ENCODE measurements at regions of chr7 and their contacts with region 1.

Region 1: DNA sequence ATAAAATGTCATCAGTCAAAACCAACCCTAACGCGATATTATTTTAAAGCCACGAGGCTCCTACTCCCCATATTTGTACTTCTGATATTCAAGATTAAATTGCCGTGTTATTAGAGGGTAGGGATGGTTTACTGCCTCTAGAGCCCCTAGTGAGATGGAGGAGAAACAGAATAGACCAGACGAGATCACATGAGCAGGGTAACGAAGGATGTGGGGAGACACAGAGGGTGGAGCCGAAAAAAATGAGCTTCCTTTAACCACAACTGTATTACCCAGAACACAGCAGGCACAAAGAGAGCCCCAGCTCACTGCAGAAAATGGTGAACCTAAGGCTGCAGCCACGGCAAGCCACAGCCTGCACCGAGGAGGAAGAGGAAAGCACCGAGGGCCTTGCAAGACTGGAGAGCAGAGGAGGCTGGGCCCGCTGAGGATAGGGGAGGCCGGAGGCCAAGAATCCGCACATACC is 14.3 kb downstream of the ZC3HAV1 start:
- DNase-seq: peak; percentile 65 to 96 (median 76)
- ATAC-seq: peak; percentile 87
- H3K4me3 ChIP-seq: peak overlapping the region; percentile 52
- H3K4me3 Mint-ChIP-seq: peak overlapping the region; percentile 89
- H3K27ac ChIP-seq: peak overlapping the region; percentile 74 to 80
- H3K27ac Mint-ChIP-seq: peak overlapping the region; percentile 92
- H3K4me1 ChIP-seq: peaks cover 87% of the 10 kb centered on the region
- H3K4me1 Mint-ChIP-seq: peaks cover 89% of the 10 kb centered on the region
- H3K27me3 ChIP-seq: no peaks in the 10 kb centered on the region
- H3K27me3 Mint-ChIP-seq: no peaks in the 10 kb centered on the region
- CTCF ChIP-seq: no peak

Region 2: GRCh38 chr7:139043823-139044812 is 51.1 kb before region 1 on chr7:
- CTCF ChIA-PET with region 1: no interaction called
- POLR2A ChIA-PET with region 1: interaction called, 15 read pairs
- intact Hi-C with region 1: no loop called
- DNase-seq: peak; percentile 37 to 81 (median 68)
- ATAC-seq: peak; percentile 67
- H3K4me3 ChIP-seq: no peak overlapping the region
- H3K4me3 Mint-ChIP-seq: peak overlapping the region; percentile 18
- H3K27ac ChIP-seq: peak overlapping the region; percentile 10 to 46
- H3K27ac Mint-ChIP-seq: peak overlapping the region; percentile 45
- H3K4me1 ChIP-seq: peaks cover 41% of the 10 kb centered on the region
- H3K4me1 Mint-ChIP-seq: peaks cover 63% of the 10 kb centered on the region
- H3K27me3 ChIP-seq: no peaks in the 10 kb centered on the region
- H3K27me3 Mint-ChIP-seq: no peaks in the 10 kb centered on the region
- CTCF ChIP-seq: no peak

Region 3: GRCh38 chr7:139109188-139109982 is 14.2 kb after region 1 on chr7 and contains the start of gene ZC3HAV1:
- CTCF ChIA-PET with region 1: interaction called, 20 read pairs
- POLR2A ChIA-PET with region 1: interaction called, 171 read pairs
- intact Hi-C with region 1: loop called (anchors 1 kb)
- DNase-seq: peak; percentile 80 to 97 (median 88)
- ATAC-seq: peak; percentile 86
- H3K4me3 ChIP-seq: peak within 1 kb of the TSS; percentile 97
- H3K4me3 Mint-ChIP-seq: peak within 1 kb of the TSS; percentile 99
- H3K27ac ChIP-seq: peak within 1 kb of the TSS; percentile 97 to 98
- H3K27ac Mint-ChIP-seq: peak within 1 kb of the TSS; percentile 95
- H3K4me1 ChIP-seq: peaks cover 35% of the 10 kb centered on the region
- H3K4me1 Mint-ChIP-seq: peaks cover 52% of the 10 kb centered on the region
- H3K27me3 ChIP-seq: no peaks in the 10 kb centered on the region
- H3K27me3 Mint-ChIP-seq: no peaks in the 10 kb centered on the region
- CTCF ChIP-seq: no peak
- total RNA-seq, gene ZC3HAV1: 169 to 178 TPM

Region 4: DNA sequence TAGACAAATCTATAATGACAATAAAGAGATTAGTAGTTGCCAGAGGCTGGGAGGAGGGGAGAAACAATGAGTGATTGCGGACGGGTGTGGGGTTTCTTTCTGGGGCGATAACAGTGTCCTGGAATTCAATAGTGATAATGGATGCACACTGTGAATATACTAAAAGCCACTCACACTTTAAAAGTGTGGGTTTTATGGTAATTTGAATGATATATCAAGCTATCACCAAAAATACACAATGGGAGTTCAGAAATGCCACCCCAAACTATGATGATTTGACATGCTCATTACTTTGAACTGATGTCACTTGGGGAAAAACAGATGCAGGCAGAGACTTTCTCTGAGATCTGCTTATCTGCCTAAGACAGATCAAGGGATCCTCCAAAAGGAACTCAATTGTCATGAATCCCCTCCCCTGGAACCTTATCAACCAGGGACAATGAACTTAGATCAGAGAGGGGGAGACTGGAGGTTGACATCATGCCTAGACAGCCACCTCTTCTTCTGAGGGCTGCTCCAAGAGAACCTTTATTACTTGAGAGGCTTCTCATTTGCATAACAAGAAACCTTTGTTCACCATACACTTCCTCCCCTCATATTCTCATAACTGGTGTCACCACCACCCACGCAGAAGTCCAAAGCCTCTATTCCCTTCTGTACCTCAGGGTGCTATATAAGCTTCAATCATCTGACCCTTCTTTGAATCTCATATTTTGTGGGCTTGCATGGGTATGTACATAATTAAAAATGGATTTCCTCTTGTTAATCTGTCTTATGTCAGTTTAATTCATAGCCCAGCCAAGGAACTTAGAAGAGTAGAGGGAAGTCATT is 29.1 kb after region 1 on chr7:
- CTCF ChIA-PET with region 1: interaction called, 5 read pairs
- POLR2A ChIA-PET with region 1: interaction called, 14 read pairs
- intact Hi-C with region 1: no loop called
- DNase-seq: no peak
- ATAC-seq: no peak
- H3K4me3 ChIP-seq: no peak overlapping the region
- H3K4me3 Mint-ChIP-seq: no peak overlapping the region
- H3K27ac ChIP-seq: no peak overlapping the region
- H3K27ac Mint-ChIP-seq: no peak overlapping the region
- H3K4me1 ChIP-seq: peaks cover 25% of the 10 kb centered on the region
- H3K4me1 Mint-ChIP-seq: peaks cover 34% of the 10 kb centered on the region
- H3K27me3 ChIP-seq: no peaks in the 10 kb centered on the region
- H3K27me3 Mint-ChIP-seq: no peaks in the 10 kb centered on the region
- CTCF ChIP-seq: no peak

Region 5: DNA sequence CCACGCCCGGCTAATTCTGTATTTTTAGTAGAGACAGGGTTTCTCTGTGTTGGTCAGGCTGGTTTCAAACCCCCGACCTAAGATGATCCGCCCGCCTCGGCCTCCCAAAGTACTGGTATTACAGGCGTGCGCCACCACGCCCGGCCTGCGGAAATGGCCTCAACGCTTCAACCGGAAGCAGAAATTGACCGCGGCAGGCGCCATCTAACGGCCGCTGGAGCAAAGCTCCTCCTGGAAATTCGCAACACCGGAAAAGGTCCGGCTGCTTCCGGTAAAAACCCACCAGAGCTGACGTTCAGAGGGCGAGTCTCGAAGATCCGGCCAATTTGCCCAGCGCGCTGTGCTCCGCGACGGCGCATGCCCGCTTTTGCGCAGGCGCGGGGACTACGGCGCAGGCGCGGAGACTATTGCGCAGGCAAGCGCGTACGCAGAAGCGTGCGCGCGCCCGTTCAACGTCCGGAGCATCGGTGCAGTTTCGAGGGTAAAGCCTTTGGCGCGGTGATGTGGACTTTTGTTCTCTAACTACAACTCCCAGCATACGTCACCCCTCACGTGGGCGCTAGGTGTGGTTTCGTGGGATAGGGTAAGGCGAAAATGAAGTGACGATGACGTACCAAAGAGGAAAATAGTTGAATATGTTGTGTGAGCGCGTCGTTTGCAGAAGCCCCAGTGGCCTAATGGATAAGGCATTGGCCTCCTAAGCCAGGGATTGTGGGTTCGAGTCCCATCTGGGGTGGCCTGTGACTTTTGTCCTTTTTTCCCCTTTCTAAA is 245.0 kb after region 1 on chr7:
- CTCF ChIA-PET with region 1: no interaction called
- POLR2A ChIA-PET with region 1: interaction called, 6 read pairs
- intact Hi-C with region 1: loop called in 1 of 2 experiments (anchors 5 kb)
- DNase-seq: peak; percentile 95 to 100 (median 97)
- ATAC-seq: peak; percentile 82
- H3K4me3 ChIP-seq: peak overlapping the region; percentile 79
- H3K4me3 Mint-ChIP-seq: peak overlapping the region; percentile 94
- H3K27ac ChIP-seq: peak overlapping the region; percentile 98 to 99
- H3K27ac Mint-ChIP-seq: peak overlapping the region; percentile 99
- H3K4me1 ChIP-seq: peaks cover 19% of the 10 kb centered on the region
- H3K4me1 Mint-ChIP-seq: peaks cover 43% of the 10 kb centered on the region
- H3K27me3 ChIP-seq: no peaks in the 10 kb centered on the region
- H3K27me3 Mint-ChIP-seq: peaks cover 8% of the 10 kb centered on the region
- CTCF ChIP-seq: peak; percentile 43